Activated naive CD4-positive, alpha-beta T cell treated with anti-CD3 and anti-CD28 coated beads, Interleukin-2, amount 10 ng/mL, durations not matched to agents 7 days and 5 days (primary cell): ENCODE measurements at regions of chr14 and their contacts with region 1.

Region 1: GRCh38 chr14:106044949-106045600 is 518.7 kb downstream of the TMEM121 start:
- DNase-seq: peak; percentile 91
- H3K4me3 Mint-ChIP-seq: no peak overlapping the region
- H3K27ac Mint-ChIP-seq: no peak overlapping the region
- H3K4me1 Mint-ChIP-seq: no peaks in the 10 kb centered on the region
- H3K27me3 Mint-ChIP-seq: peaks cover 16% of the 10 kb centered on the region

Region 2: DNA sequence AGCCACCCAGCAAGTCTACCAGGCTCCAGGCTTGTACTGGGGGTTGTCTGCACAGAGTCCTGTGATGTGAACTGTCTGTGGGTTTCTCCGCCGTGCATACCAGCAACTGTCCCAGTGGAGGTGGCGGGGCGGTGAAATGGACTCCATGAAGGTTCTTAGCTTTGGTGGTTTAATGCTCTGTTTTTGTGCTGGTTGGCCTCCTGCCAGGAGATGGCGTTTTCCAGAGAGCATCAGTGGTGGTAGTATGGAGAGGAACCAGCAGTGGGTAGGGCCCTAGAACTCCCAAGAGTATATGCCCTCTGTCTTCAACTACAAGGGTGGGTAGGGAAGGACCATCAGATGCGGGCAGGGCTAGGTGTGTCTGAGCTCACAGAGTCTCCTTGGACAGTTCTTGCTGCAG is 214.9 kb before region 1 on chr14:
- CTCF ChIA-PET with region 1: no interaction called
- DNase-seq: peak; percentile 52
- H3K4me3 Mint-ChIP-seq: no peak overlapping the region
- H3K27ac Mint-ChIP-seq: no peak overlapping the region
- H3K4me1 Mint-ChIP-seq: peaks cover 12% of the 10 kb centered on the region
- H3K27me3 Mint-ChIP-seq: peaks cover 82% of the 10 kb centered on the region

Region 3: DNA sequence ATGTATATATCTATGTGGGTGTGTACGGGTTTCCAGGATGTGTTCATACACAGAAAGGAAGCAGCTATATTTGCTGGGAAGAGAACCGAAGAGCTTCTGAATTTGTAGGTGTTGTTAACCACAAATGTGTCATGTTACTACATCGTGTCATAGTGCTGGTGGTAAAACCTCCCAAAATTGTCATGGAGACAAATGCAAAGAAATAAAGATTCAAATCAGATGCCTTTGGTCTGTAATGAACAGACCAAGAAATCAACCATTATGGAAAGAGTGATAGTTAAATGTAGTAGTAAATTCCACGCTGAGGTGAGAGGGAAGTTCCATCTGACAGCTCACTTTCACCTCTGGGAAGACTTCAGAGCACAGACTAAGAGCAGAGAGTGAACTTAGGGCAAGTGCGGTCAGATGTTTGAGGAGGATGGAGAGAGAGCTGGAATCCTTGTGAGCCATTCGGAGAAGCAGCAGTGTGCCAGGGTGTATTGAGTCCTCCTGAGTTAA is 31.1 kb before region 1 on chr14:
- CTCF ChIA-PET with region 1: interaction called, 10 read pairs
- DNase-seq: no peak
- H3K4me3 Mint-ChIP-seq: no peak overlapping the region
- H3K27ac Mint-ChIP-seq: peak overlapping the region; percentile 61
- H3K4me1 Mint-ChIP-seq: peaks cover 53% of the 10 kb centered on the region
- H3K27me3 Mint-ChIP-seq: no peaks in the 10 kb centered on the region

Region 4: DNA sequence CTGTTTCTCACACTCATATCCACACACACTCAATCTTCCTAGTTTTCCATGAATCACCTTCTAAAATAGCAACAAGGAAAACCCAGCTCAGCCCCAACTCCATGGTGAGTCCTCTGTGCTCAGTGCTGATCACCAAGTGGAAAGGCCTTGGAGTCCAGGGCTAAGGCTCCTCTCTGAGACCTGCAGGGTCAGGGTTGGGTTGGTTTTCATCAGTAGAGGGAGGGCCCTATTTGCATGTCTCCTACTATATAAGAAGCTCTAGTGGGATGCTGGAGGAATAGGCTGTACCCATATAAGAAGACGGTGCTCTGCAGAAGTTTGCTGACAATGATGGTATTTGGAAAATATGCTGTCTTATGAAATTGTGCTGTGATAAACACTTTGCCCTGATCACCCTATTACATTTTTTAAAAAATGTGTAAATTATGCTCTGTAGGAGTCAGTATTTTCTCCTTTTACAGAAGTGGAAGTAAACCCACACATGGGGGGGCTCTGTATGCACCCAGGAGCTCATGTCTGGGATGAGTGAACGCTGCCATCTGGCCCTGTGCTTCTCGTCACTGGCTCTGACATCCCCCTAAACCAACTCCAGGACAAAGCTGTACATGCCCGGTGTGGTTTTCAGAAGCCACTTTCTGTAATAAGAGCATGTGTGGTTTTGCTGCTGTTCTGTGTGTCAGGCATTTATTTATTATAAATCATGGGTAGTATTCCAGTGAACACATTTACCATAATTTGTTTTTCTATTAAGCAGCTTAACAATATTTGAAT is 17.6 kb after region 1 on chr14:
- CTCF ChIA-PET with region 1: interaction called, 15 read pairs
- DNase-seq: no peak
- H3K4me3 Mint-ChIP-seq: no peak overlapping the region
- H3K27ac Mint-ChIP-seq: no peak overlapping the region
- H3K4me1 Mint-ChIP-seq: peaks cover 18% of the 10 kb centered on the region
- H3K27me3 Mint-ChIP-seq: peaks cover 49% of the 10 kb centered on the region

Region 5: DNA sequence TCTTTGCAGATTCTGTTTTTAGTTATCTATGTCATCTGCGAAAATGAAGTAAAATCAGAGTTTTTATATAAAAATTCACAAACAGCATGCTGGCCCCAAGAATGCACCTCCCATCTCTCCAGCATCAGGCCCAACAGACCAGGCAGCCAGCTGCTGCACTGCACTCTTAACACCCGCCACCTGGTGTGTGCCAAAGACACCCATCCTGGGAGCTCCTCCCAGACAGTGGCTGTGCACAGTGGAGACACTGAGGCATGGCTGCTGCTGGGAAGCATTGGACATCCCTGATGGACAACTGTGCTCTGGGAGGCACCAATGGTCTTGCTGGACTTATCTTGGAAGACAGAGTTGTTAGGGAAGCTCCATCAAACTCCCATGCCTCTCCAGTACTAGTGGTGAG is 298.6 kb after region 1 on chr14:
- CTCF ChIA-PET with region 1: no interaction called
- DNase-seq: no peak
- H3K4me3 Mint-ChIP-seq: no peak overlapping the region
- H3K27ac Mint-ChIP-seq: no peak overlapping the region
- H3K4me1 Mint-ChIP-seq: no peaks in the 10 kb centered on the region
- H3K27me3 Mint-ChIP-seq: peaks cover 20% of the 10 kb centered on the region

Region 6: GRCh38 chr14:106642090-106642489 is 597.0 kb after region 1 on chr14:
- CTCF ChIA-PET with region 1: no interaction called
- DNase-seq: no peak
- H3K4me3 Mint-ChIP-seq: no peak overlapping the region
- H3K27ac Mint-ChIP-seq: no peak overlapping the region
- H3K4me1 Mint-ChIP-seq: peaks cover 4% of the 10 kb centered on the region
- H3K27me3 Mint-ChIP-seq: peaks cover 55% of the 10 kb centered on the region